ENCODE measurements at regions of chr15 and their contacts with region 1.

Region 1: DNA sequence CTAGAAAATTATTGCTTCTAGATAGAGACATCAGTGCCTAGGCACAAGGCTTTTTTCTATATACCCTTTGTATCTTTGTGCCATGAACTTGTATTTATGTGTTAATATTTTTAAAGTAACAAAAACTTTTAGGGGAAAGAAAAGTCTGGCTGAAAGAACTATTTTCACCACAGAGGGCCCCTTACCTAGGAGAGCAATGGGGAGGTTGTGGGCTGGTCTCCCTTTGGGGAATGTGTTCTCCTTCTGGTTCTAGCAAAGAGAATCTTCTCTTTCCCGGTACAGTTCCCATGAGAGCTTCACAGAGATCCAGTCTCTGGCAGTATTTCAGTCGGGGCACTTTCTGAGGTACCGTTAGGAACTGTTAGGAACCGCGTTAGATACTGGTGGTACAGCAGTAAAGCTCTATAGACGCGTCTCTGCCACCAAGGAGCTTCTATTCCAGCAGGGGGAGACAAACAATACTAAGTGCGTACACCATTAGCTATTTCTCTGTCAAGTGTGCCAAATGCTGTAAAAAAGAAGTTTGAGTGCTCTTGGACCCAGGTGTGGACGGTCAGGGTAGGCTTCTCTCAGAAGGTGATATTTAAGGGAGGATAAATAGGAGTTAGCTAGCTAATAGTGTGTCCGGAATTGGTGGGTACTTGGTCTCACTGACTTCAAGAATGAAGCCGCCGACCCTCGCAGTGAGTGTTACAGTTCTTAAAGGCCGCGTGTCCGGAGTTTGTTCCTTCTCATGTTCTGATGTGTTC is 4.6 kb upstream of the EPB42 start:
- DNase-seq: no peak
- H3K4me3 ChIP-seq: no peak overlapping the region
- H3K27ac ChIP-seq: no peak overlapping the region
- H3K4me1 ChIP-seq: no peaks in the 10 kb centered on the region
- H3K27me3 ChIP-seq: peaks cover 0 to 7% (median 0%) of the 10 kb centered on the region in 3 donors
- CTCF ChIP-seq: peak; percentile 33 to 64 (median 44)
- EP300 ChIP-seq: no peak
- POLR2A ChIP-seq: no peak

Region 2: DNA sequence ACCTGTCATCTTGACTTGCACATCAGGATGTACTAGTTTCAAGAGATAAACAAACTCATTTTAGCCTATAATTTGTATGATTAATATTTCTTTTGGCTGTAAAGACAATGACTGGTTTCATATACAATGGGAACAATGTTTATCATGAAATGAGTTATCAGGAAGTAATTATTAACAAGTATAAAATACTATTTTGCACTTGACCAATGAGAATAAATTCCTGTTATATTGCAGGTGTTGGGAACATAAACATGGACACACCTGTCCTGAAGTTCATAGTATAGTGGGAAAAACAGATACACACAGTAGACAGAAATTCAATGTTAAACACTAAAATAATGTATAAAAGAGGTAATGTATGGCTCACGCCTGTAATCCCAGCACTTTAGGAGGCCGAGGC is 176.4 kb before region 1 on chr15:
- intact Hi-C with region 1: no loop called
- DNase-seq: no peak
- H3K4me3 ChIP-seq: no peak overlapping the region
- H3K27ac ChIP-seq: no peak overlapping the region
- H3K4me1 ChIP-seq: no peaks in the 10 kb centered on the region
- H3K27me3 ChIP-seq: no peaks in the 10 kb centered on the region
- CTCF ChIP-seq: no peak
- EP300 ChIP-seq: no peak
- POLR2A ChIP-seq: no peak

Region 3: GRCh38 chr15:43285609-43286037 is 60.2 kb after region 1 on chr15:
- intact Hi-C with region 1: loop called (anchors 10 kb)
- DNase-seq: no peak
- H3K4me3 ChIP-seq: no peak overlapping the region
- H3K27ac ChIP-seq: no peak overlapping the region
- H3K4me1 ChIP-seq: no peaks in the 10 kb centered on the region
- H3K27me3 ChIP-seq: no peaks in the 10 kb centered on the region
- CTCF ChIP-seq: peak; percentile 70 to 91 (median 85)
- EP300 ChIP-seq: no peak
- POLR2A ChIP-seq: no peak

Region 4: DNA sequence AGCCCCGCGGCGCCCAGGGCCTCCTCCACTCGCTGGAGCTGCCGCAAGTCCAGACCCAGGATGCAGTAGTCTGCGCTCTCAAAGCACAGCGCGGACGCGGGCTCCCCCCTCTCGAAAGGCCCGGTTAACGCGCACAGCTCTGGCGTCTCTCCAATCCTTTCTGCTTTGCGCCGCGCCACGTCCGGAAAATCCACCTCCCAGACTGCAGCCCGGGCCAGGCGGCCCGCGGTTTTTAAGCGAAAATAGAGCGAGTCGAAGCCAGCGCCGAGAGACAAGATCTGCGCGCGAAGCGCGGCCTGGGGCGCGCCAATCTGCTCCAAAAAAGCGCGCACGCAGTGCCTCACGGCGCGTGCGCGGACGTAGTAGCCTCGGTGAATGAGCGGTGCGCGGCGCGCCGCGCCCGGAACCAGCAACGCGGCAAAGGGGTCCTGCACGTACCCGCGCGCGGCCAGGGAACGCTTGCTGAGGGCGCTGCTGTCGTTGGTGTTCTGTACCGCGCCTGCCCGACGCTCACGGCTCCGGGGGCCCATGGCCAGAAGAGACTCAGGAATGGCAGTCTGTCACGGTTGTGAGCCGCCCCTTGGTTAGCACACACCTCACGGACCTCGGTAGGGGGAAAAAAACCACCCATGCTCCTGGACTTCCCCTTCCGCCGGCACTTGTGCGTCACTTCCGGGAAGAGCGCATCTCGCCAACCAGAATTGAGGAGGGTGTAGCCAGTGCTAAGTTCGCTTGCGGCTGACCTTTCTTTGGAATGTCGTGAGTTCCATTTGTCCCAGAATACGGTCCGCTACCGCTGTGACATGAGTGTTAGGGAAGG is 104.8 kb after region 1 on chr15 and contains the start of gene LCMT2:
- intact Hi-C with region 1: no loop called
- DNase-seq: peak; percentile 98
- H3K4me3 ChIP-seq: peak within 1 kb of the TSS; percentile 69 to 80 (median 72)
- H3K27ac ChIP-seq: peak within 1 kb of the TSS; percentile 86 to 98 (median 96)
- H3K4me1 ChIP-seq: peaks cover 0 to 26% (median 19%) of the 10 kb centered on the region in 4 donors
- H3K27me3 ChIP-seq: no peaks in the 10 kb centered on the region
- CTCF ChIP-seq: no peak
- EP300 ChIP-seq: no peak
- POLR2A ChIP-seq: peak; percentile 50 to 53
- total RNA-seq, gene LCMT2: 2.8 to 5.4 (median 4.0) TPM